HepG2 (cell line): ENCODE measurements at regions of chr1 and their contacts with region 1.

Region 1: DNA sequence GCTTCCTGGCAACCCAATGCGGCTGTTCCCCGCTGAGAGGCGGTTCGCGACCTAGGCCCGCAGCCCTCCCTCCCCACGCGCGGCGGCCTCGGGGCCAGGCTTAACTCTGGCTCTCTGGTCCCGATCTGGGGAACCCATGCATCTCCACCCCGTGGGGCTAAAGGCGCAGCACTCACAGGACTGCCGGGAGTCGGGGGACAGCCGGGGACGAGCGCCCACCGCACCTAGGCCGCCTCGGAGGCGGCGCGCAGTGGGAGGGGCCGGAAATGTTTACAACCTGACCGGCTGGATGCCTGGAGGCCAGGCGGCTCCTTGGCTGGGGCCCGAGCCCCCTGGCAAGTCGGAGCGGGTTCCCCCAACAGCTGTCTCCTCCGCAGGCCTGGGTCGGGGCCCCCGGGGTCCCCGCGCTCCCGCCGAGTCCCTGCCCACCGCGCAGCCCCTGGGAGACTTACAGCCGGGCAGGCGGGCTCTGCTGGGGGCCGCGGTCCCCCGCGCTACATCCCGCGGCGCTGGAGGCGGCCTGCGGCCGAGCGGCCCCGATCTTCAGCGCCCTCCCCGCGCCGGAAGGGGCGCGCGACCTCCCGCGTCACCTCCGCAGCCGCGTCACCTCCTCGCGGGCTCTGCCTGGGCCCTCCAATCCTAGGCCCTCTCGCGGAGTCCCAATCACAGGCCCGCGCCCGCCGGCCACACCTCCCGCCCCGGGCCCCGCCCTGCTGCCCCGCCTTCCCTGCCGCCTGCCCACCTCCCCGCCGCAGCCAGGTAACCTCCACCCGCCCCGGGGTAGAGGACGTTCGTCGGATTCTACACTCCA is at the start of gene ADIPOR1:
- DNase-seq: peak; percentile 71
- ATAC-seq: peak; percentile 97
- H3K4me3 ChIP-seq: peak within 1 kb of the TSS; percentile 84 to 96 (median 84)
- H3K27ac ChIP-seq: peak within 1 kb of the TSS; percentile 75
- H3K4me1 ChIP-seq: peaks cover 57% of the 10 kb centered on the region
- H3K27me3 ChIP-seq: no peaks in the 10 kb centered on the region; a peak in 1 of 5 replicates
- CTCF ChIP-seq: peak; percentile 9; the same call in 1 of the 2 replicates
- EP300 ChIP-seq: no peak
- POLR2A ChIP-seq: peak; percentile 77 to 82
- RAD21 ChIP-seq: peak; percentile 45
- total RNA-seq, gene ADIPOR1: 55.7 and 60.0 TPM in 2 replicates

Region 2: DNA sequence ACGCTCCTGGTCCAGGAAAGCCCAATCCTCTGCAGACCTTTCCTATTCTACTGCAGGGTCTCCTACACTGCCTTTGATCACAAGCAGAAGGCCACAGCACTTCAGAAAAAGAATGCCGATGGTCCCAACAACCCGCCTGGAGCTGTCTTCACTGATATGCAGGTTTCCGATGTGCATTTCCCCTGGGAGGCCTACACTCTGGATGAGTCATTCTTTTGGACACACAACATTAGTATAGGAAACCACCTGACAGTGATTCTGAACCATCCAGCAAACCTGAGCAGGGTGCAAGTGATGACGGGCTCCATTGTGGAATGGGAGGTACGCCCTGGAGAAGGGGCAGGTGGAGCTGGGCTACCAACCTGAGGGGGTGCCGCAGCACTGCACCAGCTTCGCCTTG is 132.2 kb before region 1 on chr1:
- CTCF ChIA-PET with region 1: no interaction called
- POLR2A ChIA-PET with region 1: no interaction called
- in situ Hi-C with region 1: no loop called
- intact Hi-C with region 1: no loop called
- DNase-seq: no peak
- ATAC-seq: peak; percentile 43; the same call in 1 of the 3 replicates
- H3K4me3 ChIP-seq: no peak overlapping the region
- H3K27ac ChIP-seq: no peak overlapping the region
- H3K4me1 ChIP-seq: peaks cover 18% of the 10 kb centered on the region; the same call in 1 of the 2 replicates
- H3K27me3 ChIP-seq: peaks cover 0 to 18% of the 10 kb centered on the region in 2 experiments; a peak in 2 of 5 replicates
- CTCF ChIP-seq: no peak
- EP300 ChIP-seq: no peak
- POLR2A ChIP-seq: no peak
- RAD21 ChIP-seq: no peak

Region 3: DNA sequence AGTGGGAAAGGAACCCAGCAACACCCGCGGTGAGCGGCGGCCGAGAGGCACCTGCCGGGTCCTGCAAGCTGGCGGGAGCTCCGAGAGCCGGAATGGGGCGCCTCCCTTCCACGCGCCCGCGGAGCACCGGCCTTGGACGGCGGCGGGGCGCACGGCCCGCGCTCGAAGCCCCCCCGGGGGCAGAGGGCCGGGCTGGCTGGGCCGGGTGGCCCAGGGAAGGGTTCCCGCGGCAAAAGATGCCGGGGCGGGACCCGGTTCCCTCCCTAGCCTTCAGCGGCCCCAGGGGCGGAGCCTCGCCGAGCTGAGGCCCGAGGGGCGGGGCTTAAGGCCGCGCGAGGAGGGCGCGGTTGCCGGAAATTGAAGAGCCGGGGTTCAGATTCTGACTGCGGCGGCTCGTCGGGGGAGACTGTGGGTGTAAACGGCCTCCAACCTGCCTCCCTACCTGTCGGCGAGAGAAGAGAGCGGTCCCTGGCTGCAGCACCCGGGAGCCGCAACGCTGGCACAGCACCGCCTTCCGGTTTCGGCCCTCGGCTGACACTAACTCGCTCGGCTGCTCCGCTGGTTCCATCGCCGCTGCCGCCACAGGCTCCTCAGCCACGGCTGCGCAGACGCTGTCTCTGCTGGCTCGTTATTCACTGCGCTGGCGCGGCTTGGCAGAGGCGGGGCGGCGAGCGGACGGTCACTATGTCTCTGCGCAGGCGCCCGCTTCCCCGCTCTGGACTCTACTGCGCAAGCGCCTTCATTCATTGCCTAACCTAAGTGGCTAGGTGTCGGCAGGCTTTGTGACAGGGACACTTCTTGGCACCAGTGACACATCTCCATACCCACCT is 69.2 kb before region 1 on chr1 and contains the start of gene RABIF:
- CTCF ChIA-PET with region 1: no interaction called
- POLR2A ChIA-PET with region 1: no interaction called
- in situ Hi-C with region 1: no loop called
- intact Hi-C with region 1: loop called (anchors 10 kb)
- DNase-seq: peak; percentile 93
- ATAC-seq: peak; percentile 97
- H3K4me3 ChIP-seq: peak within 1 kb of the TSS; percentile 78 to 93 (median 89)
- H3K27ac ChIP-seq: peak within 1 kb of the TSS; percentile 95
- H3K4me1 ChIP-seq: peaks cover 15% of the 10 kb centered on the region
- H3K27me3 ChIP-seq: no peaks in the 10 kb centered on the region
- CTCF ChIP-seq: peak; percentile 48
- EP300 ChIP-seq: no peak
- POLR2A ChIP-seq: peak; percentile 95 to 96
- RAD21 ChIP-seq: peak; percentile 33
- total RNA-seq, gene RABIF: 8.3 and 11.1 TPM in 2 replicates

Region 4: GRCh38 chr1:202982715-202983430 is 24.9 kb after region 1 on chr1:
- CTCF ChIA-PET with region 1: no interaction called
- POLR2A ChIA-PET with region 1: no interaction called
- in situ Hi-C with region 1: no loop called
- intact Hi-C with region 1: no loop called
- DNase-seq: no peak
- ATAC-seq: no peak
- H3K4me3 ChIP-seq: no peak overlapping the region
- H3K27ac ChIP-seq: no peak overlapping the region
- H3K4me1 ChIP-seq: peaks cover 6% of the 10 kb centered on the region
- H3K27me3 ChIP-seq: peaks cover 0 to 12% of the 10 kb centered on the region in 2 experiments; a peak in 3 of 5 replicates
- CTCF ChIP-seq: no peak
- EP300 ChIP-seq: no peak
- POLR2A ChIP-seq: no peak
- RAD21 ChIP-seq: no peak

Region 5: DNA sequence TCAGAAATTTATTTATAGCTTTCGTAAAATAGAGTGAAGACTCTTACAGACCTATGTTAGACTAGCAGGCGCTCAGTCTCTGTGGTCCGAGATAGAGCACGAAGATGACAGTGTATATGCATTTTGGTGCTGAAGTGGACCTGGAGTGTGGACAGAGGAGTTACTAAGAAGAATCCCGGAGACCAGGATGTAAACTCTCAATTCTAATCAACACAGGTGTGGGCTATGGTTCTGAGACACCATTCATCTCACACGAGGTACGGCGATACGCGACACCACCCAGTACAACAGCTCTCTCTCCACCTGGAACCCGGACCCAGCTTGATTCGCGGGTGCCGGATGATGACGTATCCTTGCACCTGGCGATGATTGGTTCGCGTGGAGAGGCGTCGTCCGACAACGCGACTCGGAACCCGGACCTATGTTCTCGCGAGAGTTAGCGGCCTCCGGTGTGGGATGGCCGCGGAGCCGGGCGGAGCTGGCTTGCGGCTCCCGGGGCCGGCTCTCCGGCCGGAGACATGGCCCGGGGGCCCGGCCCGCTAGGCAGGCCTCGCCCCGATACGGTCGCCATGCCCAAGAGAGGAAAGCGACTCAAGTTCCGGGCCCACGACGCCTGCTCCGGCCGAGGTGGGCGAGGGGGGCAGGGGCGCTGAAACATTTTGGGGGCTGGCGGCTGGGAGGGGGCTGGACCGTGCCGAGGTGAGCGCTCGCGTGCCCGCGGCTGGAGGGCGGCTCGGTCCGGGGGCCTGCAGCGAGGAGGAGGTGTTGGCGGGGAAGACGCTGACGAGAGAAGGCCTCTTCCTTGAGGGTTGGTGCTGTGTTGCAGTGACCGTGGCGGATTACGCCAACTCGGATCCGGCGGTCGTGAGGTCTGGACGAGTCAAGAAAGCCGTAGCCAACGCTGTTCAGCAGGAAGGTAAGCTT is 49.3 kb after region 1 on chr1 and contains the start of gene TMEM183A:
- CTCF ChIA-PET with region 1: no interaction called
- POLR2A ChIA-PET with region 1: no interaction called
- in situ Hi-C with region 1: no loop called
- intact Hi-C with region 1: no loop called
- DNase-seq: peak; percentile 95
- ATAC-seq: peak; percentile 94
- H3K4me3 ChIP-seq: peak within 1 kb of the TSS; percentile 92 to 98 (median 96)
- H3K27ac ChIP-seq: peak within 1 kb of the TSS; percentile 98
- H3K4me1 ChIP-seq: peaks cover 34% of the 10 kb centered on the region
- H3K27me3 ChIP-seq: no peaks in the 10 kb centered on the region; a peak in 1 of 5 replicates
- CTCF ChIP-seq: no peak
- EP300 ChIP-seq: no peak
- POLR2A ChIP-seq: peak; percentile 97 to 99
- RAD21 ChIP-seq: no peak
- total RNA-seq, gene TMEM183A: 82.0 and 85.4 TPM in 2 replicates